ENCODE measurements at regions of chr14 and their contacts with region 1.

Region 1: DNA sequence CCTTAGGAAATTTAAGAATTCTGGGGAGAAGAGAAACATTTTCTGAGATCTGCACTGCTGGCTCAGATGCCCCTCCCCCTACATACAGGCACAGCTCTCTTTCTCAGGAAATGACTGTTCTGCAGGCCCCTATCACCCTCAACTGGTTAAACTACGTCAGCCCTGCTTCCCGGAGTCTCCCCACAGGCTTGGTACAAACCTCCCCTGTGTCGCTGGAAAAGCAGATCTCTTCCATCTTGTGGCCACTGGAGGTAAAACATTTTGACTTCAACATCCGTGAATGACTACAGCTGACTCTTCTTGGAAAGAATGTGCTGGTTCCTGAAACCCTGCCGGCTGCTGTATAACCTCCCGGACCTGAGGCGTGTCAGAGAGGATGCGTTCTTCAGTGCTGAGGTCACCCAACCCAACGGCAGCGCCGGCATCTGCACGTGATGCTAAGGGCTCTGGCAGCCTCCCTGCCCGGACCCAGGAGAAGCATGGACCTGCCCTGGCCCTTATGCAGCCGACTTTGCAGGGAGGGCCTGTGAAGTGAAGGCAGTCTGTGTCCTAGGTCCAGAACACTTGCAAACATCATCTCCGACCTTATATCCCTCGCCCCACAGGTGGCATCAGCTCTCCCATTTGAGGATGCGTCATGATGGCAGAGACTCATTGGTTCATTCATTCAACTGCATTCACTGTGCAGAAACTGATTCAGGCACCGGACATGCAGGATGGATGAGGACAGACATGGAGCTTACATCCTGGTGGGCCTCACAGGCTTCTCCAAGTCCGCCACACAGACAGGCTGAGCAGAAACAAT is 129.3 kb downstream of the GCH1 start:
- DNase-seq: peak; percentile 97 to 99
- ATAC-seq: peak; percentile 93 to 94
- H3K4me3 ChIP-seq: peak overlapping the region; percentile 2; the same call in 1 of the 3 replicates
- H3K27ac ChIP-seq: peak overlapping the region; percentile 77 to 86
- H3K4me1 ChIP-seq: peaks cover 27% of the 10 kb centered on the region
- CTCF ChIP-seq: peak; percentile 63
- EP300 ChIP-seq: peak in 1 of 2 experiments; percentile 51; a peak in 1 of 5 replicates
- POLR2A ChIP-seq: no peak
- RAD21 ChIP-seq: peak; percentile 72 to 80

Region 2: GRCh38 chr14:54509546-54510501 is 263.5 kb before region 1 on chr14 and contains the start of gene CGRRF1:
- CTCF ChIA-PET with region 1: interaction called, 34 read pairs
- POLR2A ChIA-PET with region 1: interaction called, 7 read pairs
- DNase-seq: peak; percentile 94 to 98
- ATAC-seq: peak; percentile 95 to 99
- H3K4me3 ChIP-seq: peak within 1 kb of the TSS; percentile 81
- H3K27ac ChIP-seq: peak within 1 kb of the TSS; percentile 81 to 93
- H3K4me1 ChIP-seq: peaks cover 8% of the 10 kb centered on the region; the same call in 2 of the 3 replicates
- CTCF ChIP-seq: peak; percentile 33; the same call in 2 of the 3 replicates
- EP300 ChIP-seq: no peak
- POLR2A ChIP-seq: peak; percentile 87
- RAD21 ChIP-seq: peak in 1 of 2 experiments; percentile 40; a peak in 3 of 5 replicates
- polyA plus RNA-seq, gene CGRRF1: 35.4 and 35.9 TPM in 2 replicates

Region 3: DNA sequence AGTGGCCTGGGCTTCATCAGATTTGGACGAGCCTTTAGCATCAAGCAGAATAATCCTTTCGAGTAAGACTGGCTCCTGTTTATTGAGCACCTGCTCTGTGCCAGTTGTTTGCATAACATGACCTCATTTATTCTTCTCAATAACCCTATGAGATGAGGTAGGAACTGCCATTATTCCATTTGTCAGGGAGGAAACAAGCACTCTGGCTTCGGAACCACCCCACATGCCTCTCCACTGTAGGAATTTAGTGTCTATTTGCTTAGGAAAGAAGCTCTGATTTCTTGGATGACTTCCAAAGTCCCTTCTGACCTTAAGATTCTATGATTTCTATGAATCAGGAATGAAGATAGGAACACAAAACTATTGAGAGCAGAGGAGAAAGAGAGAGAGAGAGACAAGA is 195.4 kb before region 1 on chr14:
- CTCF ChIA-PET with region 1: interaction called, 14 read pairs
- POLR2A ChIA-PET with region 1: interaction called, 3 read pairs
- DNase-seq: peak; percentile 33 to 82
- ATAC-seq: peak; percentile 53 to 81; a peak in 5 of 6 replicates
- H3K4me3 ChIP-seq: no peak overlapping the region
- H3K27ac ChIP-seq: peak overlapping the region; percentile 20 to 68; a peak in 4 of 6 replicates
- H3K4me1 ChIP-seq: peaks cover 33% of the 10 kb centered on the region
- CTCF ChIP-seq: no peak
- EP300 ChIP-seq: no peak
- POLR2A ChIP-seq: no peak
- RAD21 ChIP-seq: no peak; a peak in 1 of 5 replicates

Region 4: GRCh38 chr14:54691525-54692283 is 81.7 kb before region 1 on chr14:
- CTCF ChIA-PET with region 1: interaction called, 35 read pairs
- POLR2A ChIA-PET with region 1: interaction called, 5 read pairs
- DNase-seq: peak; percentile 59 to 73
- ATAC-seq: peak; percentile 97 to 98
- H3K4me3 ChIP-seq: no peak overlapping the region
- H3K27ac ChIP-seq: no peak overlapping the region
- H3K4me1 ChIP-seq: peaks cover 5% of the 10 kb centered on the region
- CTCF ChIP-seq: peak; percentile 85
- EP300 ChIP-seq: no peak
- POLR2A ChIP-seq: no peak
- RAD21 ChIP-seq: peak; percentile 92 to 95

Region 5: DNA sequence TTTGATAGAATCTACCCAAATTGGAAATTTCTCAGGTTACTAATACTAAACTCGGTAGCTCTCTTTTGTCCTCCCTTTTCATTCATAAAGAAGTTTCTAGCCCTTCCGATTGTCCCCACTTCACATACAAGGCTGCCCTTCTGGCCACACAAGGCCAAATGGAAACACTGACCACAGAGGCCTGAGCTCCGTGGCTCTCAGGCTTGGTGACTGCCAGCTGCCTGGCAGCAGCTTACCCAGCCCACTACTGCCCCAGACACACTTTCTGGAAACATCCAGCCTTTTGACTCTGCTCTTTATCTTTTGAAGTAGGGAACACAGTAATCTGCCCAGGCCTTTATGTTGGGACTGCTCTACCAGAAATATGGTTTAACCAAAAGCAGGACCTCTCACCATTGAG is 37.9 kb before region 1 on chr14:
- CTCF ChIA-PET with region 1: interaction called, 16 read pairs
- POLR2A ChIA-PET with region 1: no interaction called
- DNase-seq: no peak
- ATAC-seq: no peak
- H3K4me3 ChIP-seq: no peak overlapping the region
- H3K27ac ChIP-seq: no peak overlapping the region
- H3K4me1 ChIP-seq: peaks cover 10% of the 10 kb centered on the region
- CTCF ChIP-seq: no peak
- EP300 ChIP-seq: no peak
- POLR2A ChIP-seq: no peak
- RAD21 ChIP-seq: no peak

Region 6: DNA sequence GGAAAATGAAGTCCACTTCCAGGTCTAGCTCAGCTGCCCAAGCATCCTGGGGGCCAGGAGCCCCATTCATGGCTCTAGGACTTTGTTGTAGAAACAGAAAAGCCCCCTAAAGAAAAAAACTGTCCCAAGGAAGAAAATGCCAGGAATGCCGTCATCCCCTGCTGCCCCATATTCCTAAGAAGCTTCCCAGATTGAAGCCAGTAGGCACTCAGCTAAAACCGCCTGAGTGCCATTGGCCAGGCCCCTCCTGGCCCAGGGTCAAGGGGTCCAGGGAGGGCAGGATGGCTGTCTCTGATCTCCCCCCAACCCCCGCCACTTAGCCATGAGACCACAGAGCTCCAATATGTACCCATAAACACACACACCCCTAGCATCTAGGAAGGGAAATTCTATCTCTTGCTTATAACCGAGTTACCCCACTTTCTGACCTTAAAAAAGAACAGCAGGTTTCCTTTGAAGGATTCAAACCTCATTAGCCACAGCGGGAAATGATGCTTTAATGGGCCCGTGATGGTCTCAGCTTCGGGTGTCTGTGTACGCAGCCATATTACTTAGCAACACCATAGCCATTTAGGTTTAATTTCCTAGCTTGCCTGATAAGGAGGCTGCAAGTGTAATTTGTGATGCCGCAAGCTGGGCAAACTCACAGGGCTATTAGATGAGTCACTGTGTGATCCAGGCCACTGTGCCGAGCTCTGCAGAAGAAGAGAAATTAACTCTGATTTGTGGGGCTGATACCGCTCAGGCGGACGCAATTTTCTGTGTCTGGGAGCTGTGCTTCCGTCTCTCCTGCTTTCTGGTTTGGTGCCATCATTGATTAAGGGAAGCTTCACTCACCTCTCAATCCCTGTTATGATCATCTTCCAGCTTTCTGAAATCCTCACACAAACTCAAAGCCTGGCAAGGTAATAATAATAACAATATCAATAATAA is 45.1 kb after region 1 on chr14:
- CTCF ChIA-PET with region 1: interaction called, 15 read pairs
- POLR2A ChIA-PET with region 1: no interaction called
- DNase-seq: no peak
- ATAC-seq: peak in 1 of 2 experiments; percentile 56; a peak in 3 of 6 replicates
- H3K4me3 ChIP-seq: no peak overlapping the region
- H3K27ac ChIP-seq: no peak overlapping the region
- H3K4me1 ChIP-seq: no peaks in the 10 kb centered on the region
- CTCF ChIP-seq: no peak
- EP300 ChIP-seq: no peak
- POLR2A ChIP-seq: no peak
- RAD21 ChIP-seq: no peak